ENCODE measurements at regions of chr6 and their contacts with region 1.

Region 1: GRCh38 chr6:12295558-12296254 is 5.5 kb downstream of the EDN1 start:
- DNase-seq: peak in 1 of 2 experiments; percentile 59
- ATAC-seq: peak; percentile 48 to 55
- H3K4me3 ChIP-seq: peak overlapping the region; percentile 81
- H3K27ac ChIP-seq: peak overlapping the region; percentile 89 to 95
- H3K4me1 ChIP-seq: peaks cover 66% of the 10 kb centered on the region
- CTCF ChIP-seq: no peak
- EP300 ChIP-seq: no peak
- POLR2A ChIP-seq: no peak
- RAD21 ChIP-seq: no peak

Region 2: GRCh38 chr6:12265791-12266190 is 29.9 kb before region 1 on chr6:
- CTCF ChIA-PET with region 1: no interaction called
- POLR2A ChIA-PET with region 1: no interaction called
- DNase-seq: no peak
- ATAC-seq: no peak
- H3K4me3 ChIP-seq: no peak overlapping the region
- H3K27ac ChIP-seq: no peak overlapping the region
- H3K4me1 ChIP-seq: peaks cover 2% of the 10 kb centered on the region; the same call in 1 of the 3 replicates
- CTCF ChIP-seq: no peak
- EP300 ChIP-seq: no peak
- POLR2A ChIP-seq: no peak
- RAD21 ChIP-seq: no peak

Region 3: DNA sequence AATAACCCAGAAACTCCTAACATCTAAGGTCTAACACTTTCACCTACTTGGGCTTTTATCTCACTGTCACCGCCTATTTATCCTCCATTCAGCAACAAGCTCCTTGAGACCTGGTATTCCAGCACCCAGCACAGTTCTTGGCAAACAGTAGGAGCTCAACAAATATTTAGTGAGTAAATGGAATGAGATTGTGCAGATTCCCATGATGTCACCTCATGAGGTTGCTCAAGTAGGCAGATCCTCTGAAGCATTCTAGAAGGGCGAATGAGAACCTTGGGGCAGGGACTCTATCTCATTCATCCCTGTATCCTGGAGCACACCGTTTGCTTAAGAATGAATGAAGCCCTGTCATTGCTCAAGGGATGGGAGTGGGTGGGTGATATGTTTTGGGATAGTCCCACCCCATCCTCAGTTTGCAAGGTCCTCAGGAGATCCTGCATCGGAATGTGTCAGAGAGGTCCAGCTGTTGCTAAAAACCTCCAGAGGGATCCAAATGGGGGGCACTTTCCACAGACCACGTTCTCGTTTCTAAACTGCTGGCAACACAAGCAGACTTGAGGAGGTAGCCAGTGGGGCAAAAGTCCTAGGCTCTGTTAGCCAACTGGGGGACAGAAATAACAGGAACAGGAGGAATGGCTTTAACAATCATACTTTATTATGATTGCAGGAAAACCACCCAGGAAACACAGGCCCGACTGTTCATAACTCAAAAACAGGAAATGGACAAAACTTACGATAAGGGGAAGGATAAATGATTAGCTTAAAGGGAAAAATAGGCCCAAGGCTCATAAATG is 36.4 kb after region 1 on chr6:
- CTCF ChIA-PET with region 1: interaction called, 10 read pairs
- POLR2A ChIA-PET with region 1: interaction called, 13 read pairs
- DNase-seq: peak; percentile 54 to 99
- ATAC-seq: peak; percentile 93 to 96
- H3K4me3 ChIP-seq: no peak overlapping the region
- H3K27ac ChIP-seq: peak overlapping the region; percentile 95 to 98
- H3K4me1 ChIP-seq: peaks cover 86% of the 10 kb centered on the region
- CTCF ChIP-seq: no peak
- EP300 ChIP-seq: peak; percentile 88 to 93; a peak in 4 of 5 replicates
- POLR2A ChIP-seq: no peak
- RAD21 ChIP-seq: peak; percentile 24 to 31; a peak in 4 of 5 replicates

Region 4: GRCh38 chr6:12348530-12349511 is 53.1 kb after region 1 on chr6:
- CTCF ChIA-PET with region 1: interaction called, 11 read pairs
- POLR2A ChIA-PET with region 1: interaction called, 28 read pairs
- DNase-seq: peak; percentile 78 to 98
- ATAC-seq: peak; percentile 94 to 97
- H3K4me3 ChIP-seq: no peak overlapping the region
- H3K27ac ChIP-seq: peak overlapping the region; percentile 85 to 88
- H3K4me1 ChIP-seq: peaks cover 59% of the 10 kb centered on the region
- CTCF ChIP-seq: no peak
- EP300 ChIP-seq: peak; percentile 98 to 99
- POLR2A ChIP-seq: no peak
- RAD21 ChIP-seq: peak; percentile 53 to 82

Region 5: GRCh38 chr6:12483712-12484111 is 188.0 kb after region 1 on chr6:
- CTCF ChIA-PET with region 1: interaction called, 36 read pairs
- POLR2A ChIA-PET with region 1: interaction called, 26 read pairs
- DNase-seq: peak; percentile 30 to 95
- ATAC-seq: peak; percentile 86 to 93
- H3K4me3 ChIP-seq: peak overlapping the region; percentile 22; the same call in 1 of the 3 replicates
- H3K27ac ChIP-seq: peak overlapping the region; percentile 92 to 98
- H3K4me1 ChIP-seq: peaks cover 54% of the 10 kb centered on the region
- CTCF ChIP-seq: no peak
- EP300 ChIP-seq: peak; percentile 75 to 79; a peak in 4 of 5 replicates
- POLR2A ChIP-seq: no peak
- RAD21 ChIP-seq: peak; percentile 39 to 45

Region 6: DNA sequence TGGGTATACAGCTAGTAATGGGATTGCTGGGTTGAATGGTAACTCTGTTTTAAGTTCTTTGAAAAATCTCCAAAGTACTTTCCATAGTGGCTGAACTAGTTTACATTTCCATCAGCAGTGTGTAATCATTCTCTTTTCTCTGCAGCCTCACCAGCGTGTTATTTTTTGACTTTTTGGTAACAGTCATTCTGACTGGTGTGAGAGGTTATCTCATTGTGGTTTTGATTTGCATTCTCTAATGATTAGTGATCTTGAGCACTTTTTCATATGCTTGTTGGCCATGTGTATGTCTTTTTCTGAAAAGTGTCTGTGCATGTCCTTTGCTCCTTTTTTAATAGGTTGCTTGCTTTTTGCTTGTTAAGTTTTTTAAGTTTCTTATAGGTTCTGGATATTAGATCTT is 226.6 kb after region 1 on chr6:
- CTCF ChIA-PET with region 1: no interaction called
- POLR2A ChIA-PET with region 1: no interaction called
- DNase-seq: no peak
- ATAC-seq: no peak
- H3K4me3 ChIP-seq: no peak overlapping the region
- H3K27ac ChIP-seq: no peak overlapping the region
- H3K4me1 ChIP-seq: no peaks in the 10 kb centered on the region
- CTCF ChIP-seq: no peak
- EP300 ChIP-seq: no peak
- POLR2A ChIP-seq: no peak
- RAD21 ChIP-seq: no peak